ENCODE measurements at regions of chr19 and their contacts with region 1.

Region 1: GRCh38 chr19:46614114-46614722 is 10.7 kb downstream of the PTGIR start:
- DNase-seq: peak; percentile 86
- ATAC-seq: peak; percentile 68 to 83 (median 80)
- H3K4me3 ChIP-seq: no peak overlapping the region
- H3K27ac ChIP-seq: no peak overlapping the region
- H3K4me1 ChIP-seq: peaks cover 8 to 57% (median 31%) of the 10 kb centered on the region in 9 donors
- H3K27me3 ChIP-seq: no peaks in the 10 kb centered on the region
- CTCF ChIP-seq: peak; percentile 82 to 95 (median 92)

Region 2: DNA sequence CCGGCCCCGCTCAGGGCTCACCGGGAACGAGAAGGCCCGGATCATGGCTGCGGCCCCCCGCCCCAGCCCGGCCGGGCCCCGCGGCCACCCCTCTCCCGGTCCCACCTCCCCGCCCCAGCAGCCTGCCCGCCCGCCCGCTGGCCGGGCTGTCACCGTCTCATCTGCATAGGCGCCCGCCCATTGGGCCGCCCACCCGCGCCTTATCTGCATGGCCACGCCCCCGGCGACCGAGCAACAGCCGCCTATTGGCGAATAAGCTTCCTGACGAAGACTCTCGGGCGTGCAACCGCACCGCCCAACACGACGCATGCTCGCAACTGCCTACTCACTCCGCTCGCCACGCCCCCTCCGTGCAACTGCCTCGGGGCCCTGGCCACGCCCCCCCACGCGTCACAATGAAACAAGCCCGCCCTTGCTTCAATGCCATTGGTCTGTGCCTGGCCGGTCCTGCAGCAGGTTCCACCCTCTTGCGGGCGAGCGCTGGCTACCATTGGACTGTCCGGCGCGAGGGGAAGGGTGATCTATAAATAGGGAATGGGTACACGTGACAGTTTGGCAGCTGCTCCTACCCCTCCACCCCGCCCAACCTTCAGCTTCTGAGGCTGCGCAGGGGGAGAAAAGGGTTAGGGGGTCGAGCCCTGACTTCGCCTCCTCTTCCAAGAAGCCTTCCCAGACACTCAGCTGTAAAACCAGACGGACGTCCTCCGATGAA is 47.0 kb after region 1 on chr19 and contains the start of gene DACT3:
- intact Hi-C with region 1: loop called in 9 of 10 experiments (anchors 1 to 5 kb)
- DNase-seq: peak; percentile 100
- ATAC-seq: peak; percentile 93 to 98 (median 96)
- H3K4me3 ChIP-seq: peak within 1 kb of the TSS; percentile 46 to 87 (median 68)
- H3K27ac ChIP-seq: peak within 1 kb of the TSS; percentile 2 to 88 (median 74)
- H3K4me1 ChIP-seq: peaks cover 3 to 32% (median 20%) of the 10 kb centered on the region in 9 donors
- H3K27me3 ChIP-seq: peaks cover 0 to 41% (median 0%) of the 10 kb centered on the region in 7 donors
- CTCF ChIP-seq: peak in 2 of 9 donors; percentile 7 to 20
- total RNA-seq, gene DACT3: 6.9 to 29.3 (median 14.9) TPM